Posterior cingulate gyrus (tissue), 11 donors: ENCODE measurements at regions of chr13 and their contacts with region 1.

Region 1: DNA sequence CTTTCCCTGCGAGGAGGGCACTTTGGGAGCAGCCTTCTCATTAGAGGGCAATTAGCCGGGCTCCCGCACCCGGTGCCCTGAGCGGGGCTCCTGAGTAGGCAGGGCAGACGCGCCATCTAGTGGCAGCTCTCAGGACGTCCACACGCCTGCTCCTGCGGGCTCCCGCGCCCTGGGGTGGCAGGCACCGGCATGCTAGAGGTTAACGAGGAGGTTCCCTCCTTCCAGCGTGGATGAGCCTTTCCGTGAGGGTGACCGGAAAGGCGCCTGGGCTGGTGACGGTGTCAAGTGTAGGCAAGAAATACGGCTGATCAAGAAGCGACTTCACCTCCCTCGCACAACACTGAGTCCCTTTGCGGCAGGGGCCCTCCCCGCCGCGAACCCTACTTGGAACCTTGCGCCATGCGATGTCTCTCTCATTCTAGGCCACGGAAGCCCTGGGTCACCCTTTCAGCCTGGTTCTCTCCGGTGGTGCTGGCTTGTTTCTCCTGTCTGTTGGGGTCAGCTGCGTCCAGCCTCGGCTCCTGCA is 67.7 kb downstream of the ALOX5AP start:
- DNase-seq: peak; percentile 76 to 98 (median 88)

Region 2: DNA sequence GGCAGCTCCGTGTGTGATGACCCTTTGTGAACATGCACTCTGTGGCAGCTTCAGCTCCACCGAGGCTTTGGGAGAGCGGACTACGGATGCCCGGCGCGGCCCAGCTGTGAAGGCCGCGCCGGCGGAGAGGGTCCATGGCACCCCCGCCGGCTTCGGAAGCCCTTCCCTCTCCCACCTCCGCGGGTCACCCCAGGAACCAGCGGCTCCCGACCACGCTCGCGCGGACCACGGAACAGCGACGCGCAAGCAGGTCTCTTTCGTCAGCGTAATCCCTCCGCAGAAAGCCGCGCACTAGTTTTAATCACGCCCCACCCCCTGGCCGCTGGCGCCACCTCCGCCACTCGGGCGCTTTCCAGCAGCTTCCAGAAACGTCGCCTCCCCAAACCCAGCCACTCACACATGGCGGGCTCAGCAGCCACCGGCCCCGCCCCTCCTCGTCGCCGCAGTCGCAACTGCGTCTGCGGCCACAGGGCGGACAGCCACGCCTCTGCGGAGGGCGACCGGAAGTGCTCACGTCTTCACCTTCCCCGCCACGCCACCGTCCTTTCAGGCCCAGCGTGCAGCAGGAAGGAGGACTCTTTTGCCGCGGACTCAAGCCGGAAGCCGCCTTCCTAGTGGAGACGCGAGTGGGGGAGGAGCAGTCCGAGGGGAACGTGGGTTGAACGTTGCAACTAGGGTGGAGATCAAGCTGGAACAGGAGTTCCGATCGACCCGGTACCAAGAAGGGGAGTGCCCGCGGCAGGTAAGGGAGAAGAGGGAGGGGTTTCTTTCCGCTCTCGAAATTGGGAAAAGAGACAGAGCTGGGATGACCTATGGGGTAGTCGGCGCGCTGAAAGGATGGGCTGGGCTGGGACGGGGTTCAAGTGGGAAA is 185.5 kb before region 1 on chr13 and contains the start of gene USPL1:
- intact Hi-C with region 1: loop called (anchors 5 kb)
- DNase-seq: peak; percentile 94 to 99 (median 98)

Region 3: GRCh38 chr13:30673669-30674521 is 129.1 kb before region 1 on chr13:
- intact Hi-C with region 1: loop called (anchors 1 kb)
- DNase-seq: peak; percentile 77 to 98 (median 86)

Region 4: GRCh38 chr13:30865123-30866049 is 62.4 kb after region 1 on chr13:
- intact Hi-C with region 1: loop called (anchors 2 kb)
- DNase-seq: peak; percentile 61 to 97 (median 80)

Region 5: GRCh38 chr13:31044377-31045285 is 241.6 kb after region 1 on chr13:
- intact Hi-C with region 1: loop called (anchors 5 kb)
- DNase-seq: peak; percentile 75 to 97 (median 82)